Panc1 (cell line): ENCODE measurements at regions of chr11 and their contacts with region 1.

Region 1: GRCh38 chr11:32447252-32447651 is 11.9 kb upstream of the WT1 start:
- DNase-seq: no peak
- ATAC-seq: no peak
- H3K4me3 ChIP-seq: no peak overlapping the region
- H3K27ac ChIP-seq: no peak overlapping the region
- H3K4me1 ChIP-seq: no peaks in the 10 kb centered on the region
- H3K27me3 ChIP-seq: no peaks in the 10 kb centered on the region
- CTCF ChIP-seq: no peak

Region 2: GRCh38 chr11:32500001-32500400 is 52.7 kb after region 1 on chr11:
- CTCF ChIA-PET with region 1: no interaction called
- POLR2A ChIA-PET with region 1: interaction called, 11 read pairs
- in situ Hi-C with region 1: no loop called
- intact Hi-C with region 1: no loop called
- DNase-seq: no peak
- ATAC-seq: no peak
- H3K4me3 ChIP-seq: no peak overlapping the region
- H3K27ac ChIP-seq: no peak overlapping the region
- H3K4me1 ChIP-seq: no peaks in the 10 kb centered on the region
- H3K27me3 ChIP-seq: no peaks in the 10 kb centered on the region
- CTCF ChIP-seq: no peak